ENCODE measurements at regions of chr11 and their contacts with region 1.

Region 1: DNA sequence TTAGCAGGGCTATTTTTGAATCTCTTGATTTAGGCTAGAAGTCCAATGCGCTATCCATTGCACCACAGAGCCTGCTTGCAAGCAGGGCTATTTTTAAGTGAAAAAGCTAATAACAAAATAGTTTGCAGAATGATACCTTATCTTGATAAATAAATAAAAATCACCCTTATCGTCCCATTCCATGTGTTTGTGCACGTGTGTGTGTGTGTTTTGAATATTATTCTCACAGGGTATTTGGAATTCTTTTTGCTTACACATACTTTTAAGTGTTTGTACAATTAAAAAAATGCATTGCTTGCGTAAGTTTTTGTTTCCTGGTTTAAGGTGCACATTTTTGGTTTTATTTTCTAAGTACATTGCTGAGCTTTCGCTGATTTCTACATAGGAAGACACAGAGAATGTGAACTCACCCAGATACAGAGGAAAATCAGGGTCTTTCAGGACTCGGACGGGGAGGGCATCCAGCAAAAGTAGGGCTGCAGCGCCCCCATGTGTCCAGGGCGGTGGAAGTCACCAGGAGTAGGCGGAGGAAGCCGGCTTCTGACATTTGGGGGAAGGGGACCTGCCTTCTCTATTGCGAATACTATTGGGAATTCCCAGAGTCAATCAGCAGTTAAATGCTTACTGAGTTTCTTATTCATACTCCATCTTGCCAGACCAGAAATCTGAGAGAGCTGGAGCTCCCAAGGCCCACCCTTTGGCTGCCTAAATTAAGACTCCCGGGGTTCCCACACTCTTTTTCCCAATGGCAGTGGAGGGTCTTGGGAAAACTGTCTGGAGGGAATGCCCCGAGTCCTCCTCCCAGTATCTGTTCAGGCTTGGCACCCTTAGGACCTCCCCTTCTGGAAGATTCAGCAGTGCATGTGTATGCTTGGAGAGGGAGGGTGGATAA is 27.2 kb downstream of the SLC1A2 start:
- DNase-seq: peak; percentile 79
- ATAC-seq: peak; percentile 75
- H3K4me3 Mint-ChIP-seq: peak overlapping the region; percentile 47
- H3K27ac Mint-ChIP-seq: no peak overlapping the region
- H3K4me1 Mint-ChIP-seq: peaks cover 25% of the 10 kb centered on the region
- H3K27me3 Mint-ChIP-seq: peaks cover 5% of the 10 kb centered on the region
- CTCF ChIP-seq: peak; percentile 84

Region 2: DNA sequence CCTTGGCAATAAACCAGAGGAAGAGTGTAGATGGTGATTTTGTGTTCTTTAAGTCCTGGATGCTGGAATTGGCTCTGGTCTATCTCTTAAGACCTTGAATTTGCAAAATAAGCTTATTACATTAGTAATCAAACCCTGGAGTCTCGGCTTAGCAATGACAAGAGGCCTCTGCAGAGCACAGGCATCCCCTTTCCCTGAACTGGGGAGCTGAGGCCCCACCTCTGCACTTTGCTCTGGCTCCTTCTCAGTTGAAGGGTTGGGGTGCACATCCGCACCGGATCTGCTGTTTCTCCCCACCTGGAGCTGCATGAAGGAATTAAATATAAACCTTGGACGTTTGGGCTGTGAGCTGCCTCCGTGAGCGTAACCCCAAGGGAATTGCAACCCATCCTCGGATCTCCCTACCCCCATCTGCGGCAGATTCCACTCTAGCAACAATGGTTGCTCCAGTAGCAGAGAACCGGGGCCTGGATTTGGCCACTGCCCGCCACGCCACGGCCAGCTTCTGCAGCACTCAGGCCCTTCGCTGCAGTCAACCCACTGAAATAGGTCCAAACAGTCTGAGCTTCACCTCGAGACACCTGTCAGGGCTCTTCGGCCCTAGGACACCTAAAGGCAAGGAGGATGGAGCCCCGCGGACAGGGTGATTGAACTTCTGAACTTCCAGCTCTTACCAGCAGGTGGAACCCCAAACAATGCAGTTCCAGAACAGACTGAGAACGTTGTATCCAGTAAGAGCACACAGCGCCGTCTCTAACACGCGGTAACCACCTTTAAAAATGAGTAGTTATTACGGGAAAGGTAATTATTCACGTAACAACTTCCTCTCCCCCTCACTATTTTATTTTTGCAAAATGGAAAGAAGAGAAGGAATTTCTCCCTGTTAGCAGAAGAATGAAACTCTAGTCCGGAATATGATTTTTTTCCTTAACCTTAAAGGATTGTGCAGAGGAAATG is 1395.4 kb before region 1 on chr11:
- CTCF ChIA-PET with region 1: no interaction called
- POLR2A ChIA-PET with region 1: no interaction called
- intact Hi-C with region 1: loop called (anchors 1 kb)
- DNase-seq: peak; percentile 41
- ATAC-seq: peak; percentile 98
- H3K4me3 Mint-ChIP-seq: peak overlapping the region; percentile 36
- H3K27ac Mint-ChIP-seq: no peak overlapping the region
- H3K4me1 Mint-ChIP-seq: peaks cover 10% of the 10 kb centered on the region
- H3K27me3 Mint-ChIP-seq: peaks cover 19% of the 10 kb centered on the region
- CTCF ChIP-seq: peak; percentile 40

Region 3: GRCh38 chr11:34512840-34513681 is 879.1 kb before region 1 on chr11:
- CTCF ChIA-PET with region 1: interaction called, 28 read pairs
- POLR2A ChIA-PET with region 1: no interaction called
- intact Hi-C with region 1: loop called (anchors 1 kb)
- DNase-seq: peak; percentile 44
- ATAC-seq: peak; percentile 99
- H3K4me3 Mint-ChIP-seq: no peak overlapping the region
- H3K27ac Mint-ChIP-seq: no peak overlapping the region
- H3K4me1 Mint-ChIP-seq: no peaks in the 10 kb centered on the region
- H3K27me3 Mint-ChIP-seq: no peaks in the 10 kb centered on the region
- CTCF ChIP-seq: peak; percentile 35

Region 4: DNA sequence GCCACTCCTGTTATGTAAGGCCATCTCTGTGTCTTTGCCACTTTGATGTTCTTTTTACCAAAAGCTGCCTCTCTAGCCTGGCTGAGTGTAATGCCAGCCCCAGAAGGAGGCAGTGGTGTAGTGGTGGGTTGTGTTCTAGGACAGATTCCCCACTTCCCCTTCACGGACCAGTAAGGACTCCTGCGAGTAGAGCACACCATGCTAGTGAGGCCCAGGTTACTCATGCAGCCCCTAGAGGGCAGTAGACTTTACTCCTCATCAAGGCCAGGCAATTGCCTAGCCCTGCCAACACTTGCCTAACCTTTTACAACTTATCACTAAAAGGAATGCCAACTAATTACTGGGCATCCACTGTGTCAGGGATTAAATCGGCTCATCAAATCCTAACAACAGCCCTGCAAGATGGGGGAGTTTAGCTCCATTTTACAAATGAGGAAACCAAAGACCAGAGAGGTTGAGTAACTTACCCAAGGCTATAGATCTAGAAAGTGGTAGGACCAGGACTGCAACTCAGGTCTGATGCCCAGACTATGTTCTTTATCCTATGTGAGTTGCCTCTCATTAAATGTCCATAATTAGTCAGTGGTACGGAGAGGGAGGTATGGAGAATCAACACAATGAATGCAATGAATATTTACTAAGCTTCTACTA is 551.3 kb before region 1 on chr11:
- CTCF ChIA-PET with region 1: interaction called, 3 read pairs
- POLR2A ChIA-PET with region 1: no interaction called
- intact Hi-C with region 1: loop called (anchors 1 kb)
- DNase-seq: no peak
- ATAC-seq: peak; percentile 60
- H3K4me3 Mint-ChIP-seq: no peak overlapping the region
- H3K27ac Mint-ChIP-seq: no peak overlapping the region
- H3K4me1 Mint-ChIP-seq: no peaks in the 10 kb centered on the region
- H3K27me3 Mint-ChIP-seq: peaks cover 10% of the 10 kb centered on the region
- CTCF ChIP-seq: no peak

Region 5: DNA sequence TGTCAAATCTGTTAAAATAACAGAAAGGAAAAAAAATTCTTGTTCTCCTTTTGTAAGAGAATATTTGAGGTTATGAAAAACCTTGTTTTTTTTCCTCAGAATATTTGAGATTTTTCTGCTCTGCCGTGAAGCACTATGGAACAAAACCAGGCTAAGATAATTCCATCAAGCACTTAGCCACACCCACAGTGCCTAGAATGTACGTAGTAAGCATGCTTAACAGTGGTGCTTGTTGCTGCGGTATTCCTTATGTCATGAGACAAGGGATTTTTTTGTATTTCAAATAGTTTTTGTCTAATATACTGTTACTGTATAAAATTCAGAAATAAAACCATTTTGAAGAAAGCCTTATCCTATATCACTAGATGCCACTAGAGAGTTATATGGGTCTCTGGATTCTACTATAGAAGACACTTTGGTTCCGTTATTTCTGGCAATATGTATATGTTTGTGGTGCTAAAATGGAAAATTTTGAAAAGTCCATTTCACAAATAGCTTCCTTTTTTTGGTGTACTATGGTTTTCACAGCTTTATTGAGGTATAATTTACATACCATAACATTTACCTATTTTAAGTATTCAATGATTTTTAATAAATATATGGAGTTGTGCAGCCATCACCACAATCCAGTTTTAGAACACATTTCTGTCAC is 452.0 kb before region 1 on chr11:
- CTCF ChIA-PET with region 1: interaction called, 18 read pairs
- POLR2A ChIA-PET with region 1: no interaction called
- intact Hi-C with region 1: no loop called
- DNase-seq: no peak
- ATAC-seq: no peak
- H3K4me3 Mint-ChIP-seq: no peak overlapping the region
- H3K27ac Mint-ChIP-seq: no peak overlapping the region
- H3K4me1 Mint-ChIP-seq: peaks cover 17% of the 10 kb centered on the region
- H3K27me3 Mint-ChIP-seq: no peaks in the 10 kb centered on the region
- CTCF ChIP-seq: no peak

Region 6: GRCh38 chr11:35182317-35182939 is 209.7 kb before region 1 on chr11:
- CTCF ChIA-PET with region 1: no interaction called
- POLR2A ChIA-PET with region 1: interaction called, 3 read pairs
- intact Hi-C with region 1: loop called (anchors 5 kb)
- DNase-seq: no peak
- ATAC-seq: peak; percentile 68
- H3K4me3 Mint-ChIP-seq: peak overlapping the region; percentile 68
- H3K27ac Mint-ChIP-seq: peak overlapping the region; percentile 80
- H3K4me1 Mint-ChIP-seq: peaks cover 79% of the 10 kb centered on the region
- H3K27me3 Mint-ChIP-seq: no peaks in the 10 kb centered on the region
- CTCF ChIP-seq: no peak

Region 7: GRCh38 chr11:35305670-35306382 is 86.3 kb before region 1 on chr11:
- CTCF ChIA-PET with region 1: interaction called, 3 read pairs
- POLR2A ChIA-PET with region 1: no interaction called
- intact Hi-C with region 1: loop called (anchors 2 kb)
- DNase-seq: no peak
- ATAC-seq: peak; percentile 69
- H3K4me3 Mint-ChIP-seq: no peak overlapping the region
- H3K27ac Mint-ChIP-seq: no peak overlapping the region
- H3K4me1 Mint-ChIP-seq: peaks cover 13% of the 10 kb centered on the region
- H3K27me3 Mint-ChIP-seq: no peaks in the 10 kb centered on the region
- CTCF ChIP-seq: no peak

Region 8: DNA sequence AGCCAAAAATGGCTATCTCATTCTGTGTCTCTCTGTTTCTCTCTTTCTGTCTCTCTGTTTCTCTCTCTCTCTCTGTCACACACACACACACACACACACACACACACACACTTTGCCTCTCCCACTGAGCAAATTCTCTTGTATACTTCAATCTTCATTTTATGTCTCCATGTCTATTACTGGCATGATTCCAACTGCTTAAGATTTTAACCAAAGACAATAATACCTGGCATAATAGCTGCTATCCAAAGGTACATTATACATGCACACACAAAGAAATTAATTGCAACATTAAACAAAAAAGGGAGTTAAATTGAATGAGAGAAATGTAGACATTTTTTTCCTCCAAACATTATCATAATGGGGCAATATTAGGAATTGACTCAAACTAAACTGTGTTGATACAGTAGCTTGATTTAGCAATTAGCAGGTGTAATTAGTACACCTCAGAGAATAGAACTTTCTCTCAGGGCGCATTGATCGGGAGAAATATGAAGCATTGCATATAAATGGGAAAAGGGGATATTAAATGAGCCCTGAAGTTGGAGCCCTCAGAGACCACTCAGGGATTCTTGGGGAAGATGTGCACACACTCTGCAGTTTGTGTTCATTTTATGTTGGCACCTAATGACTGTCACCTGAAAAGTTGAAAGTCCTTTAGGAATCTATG is 44.5 kb after region 1 on chr11:
- CTCF ChIA-PET with region 1: no interaction called
- POLR2A ChIA-PET with region 1: no interaction called
- intact Hi-C with region 1: no loop called
- DNase-seq: no peak
- ATAC-seq: no peak
- H3K4me3 Mint-ChIP-seq: no peak overlapping the region
- H3K27ac Mint-ChIP-seq: no peak overlapping the region
- H3K4me1 Mint-ChIP-seq: no peaks in the 10 kb centered on the region
- H3K27me3 Mint-ChIP-seq: peaks cover 21% of the 10 kb centered on the region
- CTCF ChIP-seq: no peak

Region 9: GRCh38 chr11:35746356-35747153 is 354.4 kb after region 1 on chr11:
- CTCF ChIA-PET with region 1: no interaction called
- POLR2A ChIA-PET with region 1: no interaction called
- intact Hi-C with region 1: no loop called
- DNase-seq: no peak
- ATAC-seq: no peak
- H3K4me3 Mint-ChIP-seq: no peak overlapping the region
- H3K27ac Mint-ChIP-seq: no peak overlapping the region
- H3K4me1 Mint-ChIP-seq: peaks cover 3% of the 10 kb centered on the region
- H3K27me3 Mint-ChIP-seq: no peaks in the 10 kb centered on the region
- CTCF ChIP-seq: no peak

Region 10: GRCh38 chr11:35825033-35825785 is 433.0 kb after region 1 on chr11:
- CTCF ChIA-PET with region 1: no interaction called
- POLR2A ChIA-PET with region 1: no interaction called
- intact Hi-C with region 1: no loop called
- DNase-seq: no peak
- ATAC-seq: no peak
- H3K4me3 Mint-ChIP-seq: no peak overlapping the region
- H3K27ac Mint-ChIP-seq: no peak overlapping the region
- H3K4me1 Mint-ChIP-seq: peaks cover 11% of the 10 kb centered on the region
- H3K27me3 Mint-ChIP-seq: no peaks in the 10 kb centered on the region
- CTCF ChIP-seq: no peak